ENCODE measurements at regions of chr2 and their contacts with region 1.

Region 1: GRCh38 chr2:27050281-27050995 is 1.0 kb upstream of the AGBL5 start:
- DNase-seq: peak; percentile 97
- H3K4me3 Mint-ChIP-seq: peak overlapping the region; percentile 98
- H3K27ac Mint-ChIP-seq: peak overlapping the region; percentile 100
- H3K4me1 Mint-ChIP-seq: peaks cover 18% of the 10 kb centered on the region
- H3K27me3 Mint-ChIP-seq: peaks cover 8% of the 10 kb centered on the region

Region 2: GRCh38 chr2:26785431-26786206 is 264.8 kb before region 1 on chr2 and contains the start of gene CENPA:
- CTCF ChIA-PET with region 1: no interaction called
- POLR2A ChIA-PET with region 1: no interaction called
- intact Hi-C with region 1: loop called (anchors 10 kb)
- DNase-seq: peak; percentile 97
- H3K4me3 Mint-ChIP-seq: peak within 1 kb of the TSS; percentile 85
- H3K27ac Mint-ChIP-seq: peak within 1 kb of the TSS; percentile 52
- H3K4me1 Mint-ChIP-seq: peaks cover 17% of the 10 kb centered on the region
- H3K27me3 Mint-ChIP-seq: peaks cover 2% of the 10 kb centered on the region
- total RNA-seq, gene CENPA: 36.7 to 37.8 TPM

Region 3: DNA sequence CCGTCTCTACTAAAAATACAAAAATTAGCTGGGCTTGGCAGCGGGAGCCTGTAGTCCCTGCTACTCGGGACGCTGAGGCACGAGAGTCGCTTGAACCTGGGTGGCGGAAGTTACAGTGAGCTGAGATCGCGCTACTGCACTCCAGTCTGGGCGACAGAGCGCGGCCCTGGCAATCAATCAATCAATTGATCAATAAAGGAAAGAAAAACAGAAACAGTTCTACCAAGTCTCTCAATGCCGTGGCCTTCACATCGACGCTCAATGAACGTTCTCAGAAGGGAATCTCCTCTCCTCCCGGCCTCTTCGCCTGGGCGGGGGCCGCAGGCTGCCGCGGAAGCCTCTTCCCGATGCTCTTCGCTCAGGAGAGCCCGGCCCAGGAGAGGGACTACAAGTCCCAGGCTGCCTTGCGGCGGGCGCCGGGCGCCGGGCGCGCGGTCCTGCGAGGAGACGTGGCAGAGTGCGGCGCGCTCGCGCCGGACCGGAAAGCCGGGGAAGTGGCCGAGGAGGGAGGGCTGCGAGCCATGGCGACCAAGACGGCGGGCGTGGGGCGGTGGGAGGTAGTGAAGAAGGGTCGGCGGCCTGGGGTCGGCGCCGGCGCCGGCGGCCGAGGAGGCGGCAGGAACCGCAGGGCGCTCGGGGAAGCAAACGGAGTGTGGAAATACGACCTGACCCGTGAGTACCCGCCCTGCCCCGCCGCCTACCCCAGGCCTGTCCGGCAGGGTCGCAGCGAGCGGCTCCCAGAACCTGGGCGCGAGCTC is 17.8 kb before region 1 on chr2 and contains the start of gene TMEM214:
- CTCF ChIA-PET with region 1: interaction called, 16 read pairs
- POLR2A ChIA-PET with region 1: interaction called, 14 read pairs
- intact Hi-C with region 1: loop called (anchors 1 kb)
- DNase-seq: peak; percentile 89
- H3K4me3 Mint-ChIP-seq: peak within 1 kb of the TSS; percentile 93
- H3K27ac Mint-ChIP-seq: peak within 1 kb of the TSS; percentile 78
- H3K4me1 Mint-ChIP-seq: peaks cover 40% of the 10 kb centered on the region
- H3K27me3 Mint-ChIP-seq: no peaks in the 10 kb centered on the region
- total RNA-seq, gene TMEM214: 52.4 to 60.1 TPM

Region 4: GRCh38 chr2:27071277-27071989 is 21.0 kb after region 1 on chr2 and contains the start of gene OST4:
- CTCF ChIA-PET with region 1: interaction called, 10 read pairs
- POLR2A ChIA-PET with region 1: interaction called, 17 read pairs
- intact Hi-C with region 1: loop called (anchors 1 kb)
- DNase-seq: peak; percentile 94
- H3K4me3 Mint-ChIP-seq: peak within 1 kb of the TSS; percentile 94
- H3K27ac Mint-ChIP-seq: peak within 1 kb of the TSS; percentile 93
- H3K4me1 Mint-ChIP-seq: peaks cover 71% of the 10 kb centered on the region
- H3K27me3 Mint-ChIP-seq: no peaks in the 10 kb centered on the region
- total RNA-seq, gene OST4: 307 to 310 TPM

Region 5: GRCh38 chr2:27123302-27124231 is 73.1 kb after region 1 on chr2 and contains the start of gene ABHD1:
- CTCF ChIA-PET with region 1: interaction called, 6 read pairs
- POLR2A ChIA-PET with region 1: no interaction called
- intact Hi-C with region 1: loop called (anchors 5 kb)
- DNase-seq: peak; percentile 71
- H3K4me3 Mint-ChIP-seq: peak within 1 kb of the TSS; percentile 80
- H3K27ac Mint-ChIP-seq: no peak within 1 kb of the TSS
- H3K4me1 Mint-ChIP-seq: peaks cover 15% of the 10 kb centered on the region
- H3K27me3 Mint-ChIP-seq: peaks cover 17% of the 10 kb centered on the region
- total RNA-seq, gene ABHD1: 0.29 to 0.76 TPM

Region 6: GRCh38 chr2:27211829-27212627 is 161.6 kb after region 1 on chr2 and contains the starts of genes ATRAID and SLC5A6:
- CTCF ChIA-PET with region 1: no interaction called
- POLR2A ChIA-PET with region 1: interaction called, 3 read pairs
- intact Hi-C with region 1: loop called (anchors 2 kb)
- DNase-seq: peak; percentile 92
- H3K4me3 Mint-ChIP-seq: peak within 1 kb of the TSS; percentile 98
- H3K27ac Mint-ChIP-seq: peak within 1 kb of the TSS; percentile 99
- H3K4me1 Mint-ChIP-seq: peaks cover 48% of the 10 kb centered on the region
- H3K27me3 Mint-ChIP-seq: no peaks in the 10 kb centered on the region
- total RNA-seq, gene ATRAID: 84.0 to 92.7 TPM
- total RNA-seq, gene SLC5A6: 29.2 to 30.2 TPM

Measured in activated CD4-positive, alpha-beta memory T cell treated with anti-CD3 and anti-CD28 coated beads for 36 hours (primary cell).